K562 (cell line): ENCODE measurements at regions of chr5 and their contacts with region 1.

Region 1: DNA sequence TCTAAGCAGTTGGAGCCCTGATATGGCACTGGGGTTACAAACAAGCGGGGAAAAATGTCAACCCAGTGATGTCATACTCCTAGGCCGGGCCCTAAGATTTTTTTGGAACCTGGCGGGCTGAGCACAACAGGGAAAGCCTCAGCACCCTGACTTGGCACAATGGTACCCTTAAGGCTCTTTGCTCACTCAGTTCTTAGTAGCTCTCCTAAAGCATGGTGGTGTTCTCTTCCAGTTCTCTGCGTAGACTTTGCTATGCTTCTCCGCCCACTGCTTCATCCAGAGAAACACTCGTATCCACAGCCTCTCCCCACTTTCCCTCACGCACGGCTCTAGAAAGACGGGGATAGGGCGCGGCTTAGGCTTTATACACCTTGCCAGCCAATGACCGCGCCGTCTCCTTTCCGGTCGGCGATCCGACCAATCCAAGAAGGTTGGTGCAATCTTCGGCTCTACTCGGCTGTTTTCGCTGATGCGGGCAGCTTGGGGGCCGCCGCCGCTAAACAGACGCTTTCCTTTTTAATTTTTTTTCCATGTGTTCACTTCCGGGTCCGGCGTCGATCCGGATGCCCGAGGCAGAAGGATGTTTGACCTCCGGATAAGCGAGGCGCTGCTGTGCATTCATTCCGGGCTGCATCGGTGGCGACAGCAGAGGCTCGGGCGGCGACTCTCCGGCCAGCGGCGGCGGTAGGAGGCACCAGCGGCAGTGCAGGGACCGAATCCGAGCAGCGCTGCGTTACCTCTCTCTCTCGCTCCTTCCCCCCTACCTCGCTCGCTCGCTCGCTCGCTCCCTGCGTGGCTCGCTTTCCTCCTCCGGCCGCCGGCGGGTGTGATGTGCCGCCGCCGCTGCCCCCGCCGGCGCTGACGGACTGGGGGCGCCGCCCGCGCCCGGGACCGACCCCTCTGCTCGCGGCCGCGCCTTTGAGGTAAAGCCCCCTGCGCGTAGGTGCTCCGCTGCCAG is at the start of gene CSNK1G3:
- DNase-seq: peak; percentile 89 to 96 (median 92)
- ATAC-seq: peak; percentile 98
- H3K4me3 ChIP-seq: peak within 1 kb of the TSS; percentile 81
- H3K27ac ChIP-seq: peak within 1 kb of the TSS; percentile 75
- H3K4me1 ChIP-seq: peaks cover 0 to 6% of the 10 kb centered on the region in 2 experiments; a peak in 3 of 5 replicates
- H3K27me3 ChIP-seq: no peaks in the 10 kb centered on the region
- CTCF ChIP-seq: peak in 2 of 3 experiments; percentile 3 to 13; a peak in 1 of 6 replicates
- EP300 ChIP-seq: no peak
- POLR2A ChIP-seq: peak; percentile 97
- RAD21 ChIP-seq: no peak
- polyA plus RNA-seq, gene CSNK1G3: 8.3 to 11.4 TPM

Region 2: GRCh38 chr5:123474228-123474627 is 37.7 kb before region 1 on chr5:
- CTCF ChIA-PET with region 1: no interaction called
- POLR2A ChIA-PET with region 1: interaction called, 3 read pairs
- in situ Hi-C with region 1: no loop called
- intact Hi-C with region 1: loop called (anchors 5 kb)
- DNase-seq: no peak
- ATAC-seq: no peak
- H3K4me3 ChIP-seq: no peak overlapping the region
- H3K27ac ChIP-seq: no peak overlapping the region
- H3K4me1 ChIP-seq: peaks cover 0 to 10% of the 10 kb centered on the region in 2 experiments; a peak in 2 of 5 replicates
- H3K27me3 ChIP-seq: no peaks in the 10 kb centered on the region
- CTCF ChIP-seq: no peak
- EP300 ChIP-seq: no peak
- POLR2A ChIP-seq: no peak
- RAD21 ChIP-seq: no peak

Region 3: GRCh38 chr5:123528878-123529277 is 17.0 kb after region 1 on chr5:
- CTCF ChIA-PET with region 1: no interaction called
- POLR2A ChIA-PET with region 1: interaction called, 3 read pairs
- in situ Hi-C with region 1: no loop called
- intact Hi-C with region 1: loop called (anchors 2 kb)
- DNase-seq: no peak
- ATAC-seq: no peak
- H3K4me3 ChIP-seq: no peak overlapping the region
- H3K27ac ChIP-seq: no peak overlapping the region
- H3K4me1 ChIP-seq: no peaks in the 10 kb centered on the region
- H3K27me3 ChIP-seq: no peaks in the 10 kb centered on the region
- CTCF ChIP-seq: no peak
- EP300 ChIP-seq: no peak
- POLR2A ChIP-seq: no peak
- RAD21 ChIP-seq: no peak

Region 4: DNA sequence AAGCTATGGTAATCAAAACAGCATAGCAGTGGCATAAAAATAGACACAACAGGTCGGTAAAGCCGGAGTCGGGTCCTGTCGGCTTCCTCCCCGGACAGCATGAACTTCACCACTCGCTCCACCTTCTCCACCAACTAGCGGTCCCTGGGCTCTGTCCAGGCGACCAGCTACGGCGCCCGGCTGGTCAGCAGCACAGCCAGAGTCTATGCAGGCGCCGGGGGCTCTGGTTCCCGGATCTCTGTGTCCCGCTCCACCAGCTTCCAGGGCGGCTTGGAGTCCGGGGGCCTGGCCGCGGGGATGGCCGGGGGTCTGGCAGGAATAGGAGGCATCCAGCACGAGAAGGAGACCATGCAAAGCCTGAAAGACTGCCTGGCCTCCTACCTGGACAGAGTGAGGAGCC is 124.1 kb after region 1 on chr5:
- CTCF ChIA-PET with region 1: no interaction called
- POLR2A ChIA-PET with region 1: no interaction called
- in situ Hi-C with region 1: no loop called
- intact Hi-C with region 1: no loop called
- DNase-seq: no peak
- ATAC-seq: no peak
- H3K4me3 ChIP-seq: no peak overlapping the region
- H3K27ac ChIP-seq: no peak overlapping the region
- H3K4me1 ChIP-seq: no peaks in the 10 kb centered on the region
- H3K27me3 ChIP-seq: peaks cover 0 to 11% of the 10 kb centered on the region in 2 experiments; a peak in 2 of 5 replicates
- CTCF ChIP-seq: no peak
- EP300 ChIP-seq: no peak
- POLR2A ChIP-seq: no peak
- RAD21 ChIP-seq: no peak